WTC11 (cell line): ENCODE measurements at regions of chr9 and their contacts with region 1.

Region 1: DNA sequence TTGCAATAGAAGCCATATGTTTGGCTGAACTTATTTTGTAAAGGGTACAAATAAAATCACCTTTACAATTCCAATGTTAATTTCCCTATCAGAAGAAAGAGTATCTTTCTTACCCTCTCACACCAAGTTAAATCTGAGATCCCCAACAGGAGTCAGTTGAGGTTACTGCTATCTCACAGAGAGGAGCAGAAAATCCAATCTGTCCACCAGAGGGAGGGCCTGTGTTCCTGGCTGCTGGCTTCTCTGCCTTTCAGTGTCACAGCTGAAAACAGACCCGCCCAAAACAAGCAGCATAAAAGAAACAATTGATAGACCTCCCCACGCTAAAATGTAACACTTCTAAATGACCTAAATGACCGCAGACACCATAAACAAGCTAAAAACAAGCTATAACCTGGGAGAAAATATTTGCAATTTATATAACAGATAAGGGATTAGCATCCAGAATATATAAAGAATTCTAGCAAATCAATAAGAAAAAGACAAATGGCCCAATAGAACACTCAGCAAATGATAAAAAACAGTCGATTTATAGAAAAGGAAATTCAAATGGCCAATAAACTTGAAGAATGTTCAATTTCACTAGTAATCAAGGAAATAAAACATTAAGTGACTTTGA is 24.5 kb upstream of the MVB12B start:
- DNase-seq: peak; percentile 61
- ATAC-seq: peak; percentile 88
- H3K4me3 Mint-ChIP-seq: no peak overlapping the region
- H3K27ac Mint-ChIP-seq: no peak overlapping the region
- H3K4me1 Mint-ChIP-seq: no peaks in the 10 kb centered on the region; the same call in 1 of the 2 replicates
- H3K27me3 Mint-ChIP-seq: no peaks in the 10 kb centered on the region
- CTCF ChIP-seq: no peak

Region 2: DNA sequence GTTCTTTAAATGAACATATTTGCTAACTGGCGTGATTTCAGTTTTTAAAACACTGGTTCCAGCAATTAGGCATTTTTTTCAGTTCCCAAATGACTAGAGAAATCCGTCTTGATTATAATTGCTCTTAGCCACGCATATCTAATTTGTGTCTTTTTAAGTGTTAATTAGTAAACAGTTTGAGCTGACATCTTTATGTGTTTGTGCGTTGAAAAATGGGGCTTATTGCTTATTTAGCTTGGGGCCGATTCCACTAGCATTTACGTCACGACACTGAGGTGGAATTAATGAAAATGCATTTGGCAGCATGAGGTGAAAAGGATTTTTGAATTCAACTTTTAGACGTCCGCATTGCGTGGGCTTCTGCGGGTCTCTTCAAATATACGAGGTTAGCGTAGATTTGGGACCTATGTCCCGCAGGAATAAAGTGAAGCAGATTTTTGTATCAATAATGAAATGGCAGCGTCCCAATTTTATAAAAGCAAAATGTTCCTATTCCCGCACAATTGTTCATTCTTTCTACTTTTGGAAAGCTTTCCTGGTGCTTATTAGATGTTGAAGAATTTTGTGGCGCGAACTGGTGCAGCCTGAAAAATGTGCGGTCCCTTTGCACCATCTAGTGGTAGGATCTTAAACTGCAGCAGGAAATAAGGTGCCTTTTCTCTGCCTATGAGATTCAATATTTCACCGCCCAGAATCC is 188.9 kb after region 1 on chr9:
- CTCF ChIA-PET with region 1: interaction called, 18 read pairs
- POLR2A ChIA-PET with region 1: no interaction called
- DNase-seq: no peak
- ATAC-seq: peak; percentile 43; the same call in 1 of the 2 replicates
- H3K4me3 Mint-ChIP-seq: no peak overlapping the region
- H3K27ac Mint-ChIP-seq: no peak overlapping the region
- H3K4me1 Mint-ChIP-seq: peaks cover 12% of the 10 kb centered on the region
- H3K27me3 Mint-ChIP-seq: no peaks in the 10 kb centered on the region; the same call in 1 of the 2 replicates
- CTCF ChIP-seq: peak; percentile 91